Sigmoid colon (tissue), 7 donors: ENCODE measurements at regions of chr2 and their contacts with region 1.

Region 1: GRCh38 chr2:241609859-241610793 is 26.8 kb downstream of the THAP4 start:
- DNase-seq: peak; percentile 93
- H3K4me3 ChIP-seq: peak overlapping the region; percentile 45 to 67 (median 66)
- H3K27ac ChIP-seq: peak overlapping the region; percentile 80 to 84 (median 84)
- H3K4me1 ChIP-seq: peaks cover 0 to 26% (median 23%) of the 10 kb centered on the region in 4 donors
- H3K27me3 ChIP-seq: no peaks in the 10 kb centered on the region
- CTCF ChIP-seq: peak in 3 of 4 experiments; percentile 21 to 73 (median 45)
- EP300 ChIP-seq: no peak
- POLR2A ChIP-seq: peak in 1 of 2 donors; percentile 8

Region 2: GRCh38 chr2:241508240-241509154 is 101.6 kb before region 1 on chr2 and contains the start of gene STK25:
- intact Hi-C with region 1: loop called (anchors 2 kb)
- DNase-seq: peak; percentile 99
- H3K4me3 ChIP-seq: peak within 1 kb of the TSS; percentile 65 to 99 (median 76)
- H3K27ac ChIP-seq: peak within 1 kb of the TSS; percentile 82 to 91 (median 90)
- H3K4me1 ChIP-seq: peaks cover 0 to 43% (median 40%) of the 10 kb centered on the region in 4 donors
- H3K27me3 ChIP-seq: no peaks in the 10 kb centered on the region
- CTCF ChIP-seq: peak in 1 of 4 experiments; percentile 2
- EP300 ChIP-seq: peak in 1 of 4 donors; percentile 38
- POLR2A ChIP-seq: peak in 1 of 2 donors; percentile 29
- total RNA-seq, gene STK25: 125 to 266 (median 178) TPM

Region 3: GRCh38 chr2:241546771-241547498 is 63.2 kb before region 1 on chr2:
- intact Hi-C with region 1: loop called (anchors 5 kb)
- DNase-seq: no peak
- H3K4me3 ChIP-seq: no peak overlapping the region
- H3K27ac ChIP-seq: peak overlapping the region in 1 of 4 donors; percentile 41
- H3K4me1 ChIP-seq: peaks cover 0 to 31% (median 24%) of the 10 kb centered on the region in 4 donors
- H3K27me3 ChIP-seq: peaks cover 5 to 18% (median 9%) of the 10 kb centered on the region in 3 donors
- CTCF ChIP-seq: no peak
- EP300 ChIP-seq: no peak
- POLR2A ChIP-seq: no peak

Region 4: DNA sequence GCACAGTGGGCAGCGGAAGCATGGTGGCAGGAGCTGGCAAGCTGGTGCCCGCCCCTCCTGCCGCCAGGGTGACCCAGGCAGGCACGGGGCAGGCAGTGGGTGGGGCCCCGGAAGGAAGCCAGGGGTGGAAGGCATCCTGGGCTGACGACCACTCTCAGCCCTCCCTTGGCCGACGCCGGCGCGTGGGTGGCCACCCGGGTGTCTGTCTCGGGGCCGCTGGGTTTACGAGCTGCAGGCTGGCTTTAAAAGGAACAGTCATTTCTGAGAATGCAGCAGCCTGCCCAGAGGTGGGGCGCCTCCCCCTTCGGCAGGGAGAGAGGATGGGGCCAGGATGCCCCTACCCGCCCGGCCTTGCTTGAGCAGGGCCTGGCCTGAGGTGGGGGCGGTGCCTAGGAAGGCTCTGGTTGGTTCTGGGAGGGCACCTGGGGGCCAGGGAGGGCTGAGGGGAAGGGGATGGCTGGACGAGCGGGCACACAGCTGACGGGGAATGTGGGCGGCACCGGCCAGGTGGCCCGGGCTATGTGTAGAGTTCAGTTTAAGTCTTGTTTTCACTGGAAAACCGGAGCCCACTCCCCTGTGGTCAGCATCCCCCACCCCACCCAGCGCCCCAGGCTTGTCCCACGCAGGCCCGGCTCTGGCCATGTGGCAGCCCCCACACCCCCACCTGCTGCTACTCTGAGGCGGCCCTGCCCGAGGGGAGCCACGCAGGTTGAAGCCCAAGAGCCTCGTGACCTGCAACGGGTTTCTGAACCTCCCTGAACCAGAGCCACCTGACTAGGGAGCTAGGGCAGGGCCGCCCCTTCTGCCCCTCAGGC is 45.3 kb before region 1 on chr2:
- intact Hi-C with region 1: loop called (anchors 5 kb)
- DNase-seq: peak; percentile 79
- H3K4me3 ChIP-seq: peak overlapping the region in 3 of 4 donors; percentile 29 to 41 (median 30)
- H3K27ac ChIP-seq: peak overlapping the region in 3 of 4 donors; percentile 90 to 94 (median 91)
- H3K4me1 ChIP-seq: peaks cover 0 to 70% (median 68%) of the 10 kb centered on the region in 4 donors
- H3K27me3 ChIP-seq: no peaks in the 10 kb centered on the region
- CTCF ChIP-seq: no peak
- EP300 ChIP-seq: peak in 1 of 4 donors; percentile 31
- POLR2A ChIP-seq: no peak